Sciatic nerve (tissue), 2 donors: ENCODE measurements at regions of chr11 and their contacts with region 1.

Region 1: GRCh38 chr11:63920939-63921417 is 4.0 kb upstream of the RCOR2 start:
- DNase-seq: no peak
- ATAC-seq: no peak

Region 2: GRCh38 chr11:63888170-63889086 is 32.5 kb before region 1 on chr11:
- intact Hi-C with region 1: no loop called
- DNase-seq: no peak
- ATAC-seq: peak; percentile 73

Region 3: GRCh38 chr11:63903884-63904283 is 17.1 kb before region 1 on chr11:
- intact Hi-C with region 1: loop called (anchors 1 kb)
- DNase-seq: no peak
- ATAC-seq: no peak